K562 (cell line): ENCODE measurements at regions of chr1 and their contacts with region 1.

Region 1: GRCh38 chr1:42924082-42924850 is 34.4 kb downstream of the SLC2A1 start:
- DNase-seq: peak; percentile 97 to 99 (median 98)
- ATAC-seq: peak; percentile 94
- H3K4me3 ChIP-seq: peak overlapping the region; percentile 55
- H3K27ac ChIP-seq: peak overlapping the region; percentile 78
- H3K4me1 ChIP-seq: peaks cover 34 to 43% of the 10 kb centered on the region in 2 experiments
- H3K27me3 ChIP-seq: no peaks in the 10 kb centered on the region
- CTCF ChIP-seq: peak; percentile 33 to 48 (median 45); a peak in 4 of 6 replicates
- EP300 ChIP-seq: no peak
- POLR2A ChIP-seq: peak; percentile 93
- RAD21 ChIP-seq: peak; percentile 24 to 33; a peak in 3 of 4 replicates

Region 2: GRCh38 chr1:42730988-42731387 is 193.3 kb before region 1 on chr1:
- CTCF ChIA-PET with region 1: no interaction called
- POLR2A ChIA-PET with region 1: no interaction called
- in situ Hi-C with region 1: no loop called
- intact Hi-C with region 1: no loop called
- DNase-seq: peak; percentile 47 to 72 (median 52)
- ATAC-seq: peak; percentile 66
- H3K4me3 ChIP-seq: no peak overlapping the region
- H3K27ac ChIP-seq: no peak overlapping the region
- H3K4me1 ChIP-seq: peaks cover 0 to 11% of the 10 kb centered on the region in 2 experiments; a peak in 3 of 5 replicates
- H3K27me3 ChIP-seq: peaks cover 2 to 24% of the 10 kb centered on the region in 2 experiments; a peak in 3 of 5 replicates
- CTCF ChIP-seq: peak; percentile 59 to 69 (median 65); a peak in 5 of 6 replicates
- EP300 ChIP-seq: no peak
- POLR2A ChIP-seq: no peak
- RAD21 ChIP-seq: peak in 1 of 2 experiments; percentile 88; a peak in 2 of 4 replicates

Region 3: DNA sequence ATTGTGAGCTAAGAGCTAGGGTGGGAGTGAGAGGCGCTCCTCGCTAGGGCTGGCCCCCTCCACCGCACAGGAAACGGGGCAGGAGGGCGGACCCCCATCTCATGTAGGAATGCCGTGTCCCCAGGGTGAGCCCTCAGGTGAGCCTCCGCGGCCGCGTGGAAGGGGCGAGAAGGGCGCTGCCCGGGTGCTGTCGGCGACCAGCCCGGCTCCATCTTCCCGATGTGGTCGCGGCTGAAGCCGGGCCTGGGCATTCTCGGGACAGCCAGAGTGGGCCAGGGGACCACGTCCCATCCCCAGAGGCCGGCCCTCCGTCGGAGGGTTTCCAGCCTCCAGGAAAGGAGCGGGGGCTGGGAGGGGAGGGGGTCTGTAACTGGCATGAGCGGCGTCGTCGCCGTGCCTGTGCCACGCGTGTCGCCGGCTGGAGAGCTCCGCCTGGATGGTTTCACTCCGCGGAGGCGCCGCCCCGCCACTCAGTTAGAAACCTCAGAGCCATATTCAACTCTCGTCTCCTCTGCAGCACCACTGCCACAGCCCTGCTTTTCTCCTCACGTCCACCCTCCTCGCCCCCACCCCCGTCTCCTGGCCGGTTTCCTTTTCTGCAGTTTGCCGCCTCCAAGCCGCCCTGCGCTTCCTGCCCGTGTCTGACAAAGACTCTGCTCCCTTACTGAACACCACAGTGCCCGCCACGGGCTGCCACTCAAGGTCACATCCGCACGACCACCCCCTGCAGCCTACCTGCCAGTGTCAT is 139.1 kb before region 1 on chr1 and contains the start of gene TMEM269:
- CTCF ChIA-PET with region 1: no interaction called
- POLR2A ChIA-PET with region 1: no interaction called
- in situ Hi-C with region 1: loop called (anchors 5 kb)
- intact Hi-C with region 1: no loop called
- DNase-seq: no peak
- ATAC-seq: no peak
- H3K4me3 ChIP-seq: no peak within 1 kb of the TSS
- H3K27ac ChIP-seq: no peak within 1 kb of the TSS
- H3K4me1 ChIP-seq: peaks cover 0 to 15% of the 10 kb centered on the region in 2 experiments; a peak in 3 of 5 replicates
- H3K27me3 ChIP-seq: no peaks in the 10 kb centered on the region
- CTCF ChIP-seq: no peak
- EP300 ChIP-seq: no peak
- POLR2A ChIP-seq: no peak
- RAD21 ChIP-seq: no peak
- polyA plus RNA-seq, gene TMEM269: 0.18 to 0.21 TPM

Region 4: GRCh38 chr1:42816585-42817434 is 107.5 kb before region 1 on chr1 and contains the starts of genes ERMAP and SVBP:
- CTCF ChIA-PET with region 1: no interaction called
- POLR2A ChIA-PET with region 1: no interaction called
- in situ Hi-C with region 1: no loop called
- intact Hi-C with region 1: loop called (anchors 1 kb)
- DNase-seq: peak; percentile 93 to 99 (median 99)
- ATAC-seq: peak; percentile 92
- H3K4me3 ChIP-seq: peak within 1 kb of the TSS; percentile 79
- H3K27ac ChIP-seq: peak within 1 kb of the TSS; percentile 99
- H3K4me1 ChIP-seq: peaks cover 16 to 36% of the 10 kb centered on the region in 2 experiments
- H3K27me3 ChIP-seq: no peaks in the 10 kb centered on the region
- CTCF ChIP-seq: peak in 1 of 3 experiments; percentile 27; a peak in 1 of 6 replicates
- EP300 ChIP-seq: peak; percentile 14; the same call in 1 of the 2 replicates
- POLR2A ChIP-seq: peak; percentile 90
- RAD21 ChIP-seq: peak in 1 of 2 experiments; percentile 5; a peak in 1 of 4 replicates
- polyA plus RNA-seq, gene ERMAP: 8.0 to 12.9 TPM
- polyA plus RNA-seq, gene SVBP: 37.9 TPM

Region 5: GRCh38 chr1:42822800-42823392 is 101.4 kb before region 1 on chr1:
- CTCF ChIA-PET with region 1: no interaction called
- POLR2A ChIA-PET with region 1: interaction called, 3 read pairs
- in situ Hi-C with region 1: no loop called
- intact Hi-C with region 1: loop called (anchors 2 kb)
- DNase-seq: peak in 2 of 4 experiments; percentile 44 to 63
- ATAC-seq: no peak
- H3K4me3 ChIP-seq: no peak overlapping the region
- H3K27ac ChIP-seq: peak overlapping the region; percentile 73; the same call in 2 of the 3 replicates
- H3K4me1 ChIP-seq: peaks cover 18 to 58% of the 10 kb centered on the region in 2 experiments
- H3K27me3 ChIP-seq: no peaks in the 10 kb centered on the region
- CTCF ChIP-seq: no peak
- EP300 ChIP-seq: peak; percentile 39; the same call in 1 of the 2 replicates
- POLR2A ChIP-seq: no peak
- RAD21 ChIP-seq: no peak

Region 6: GRCh38 chr1:42936309-42937078 is 12.2 kb after region 1 on chr1:
- CTCF ChIA-PET with region 1: no interaction called
- POLR2A ChIA-PET with region 1: interaction called, 13 read pairs
- in situ Hi-C with region 1: no loop called
- intact Hi-C with region 1: loop called (anchors 1 kb)
- DNase-seq: peak; percentile 93 to 98 (median 95)
- ATAC-seq: peak; percentile 89
- H3K4me3 ChIP-seq: no peak overlapping the region
- H3K27ac ChIP-seq: peak overlapping the region; percentile 74
- H3K4me1 ChIP-seq: peaks cover 96% of the 10 kb centered on the region in 2 experiments
- H3K27me3 ChIP-seq: no peaks in the 10 kb centered on the region
- CTCF ChIP-seq: no peak
- EP300 ChIP-seq: peak; percentile 94
- POLR2A ChIP-seq: 0 out of 2 replicates have a peak, but pooled peaks have one; percentile 5
- RAD21 ChIP-seq: peak in 1 of 2 experiments; percentile 33; a peak in 1 of 4 replicates

Region 7: GRCh38 chr1:42958488-42959319 is 34.4 kb after region 1 on chr1 and contains the start of gene SLC2A1:
- CTCF ChIA-PET with region 1: no interaction called
- POLR2A ChIA-PET with region 1: interaction called, 3 read pairs
- in situ Hi-C with region 1: no loop called
- intact Hi-C with region 1: loop called (anchors 1 kb)
- DNase-seq: peak; percentile 98 to 99 (median 98)
- ATAC-seq: peak; percentile 84
- H3K4me3 ChIP-seq: peak within 1 kb of the TSS; percentile 91
- H3K27ac ChIP-seq: peak within 1 kb of the TSS; percentile 92
- H3K4me1 ChIP-seq: peaks cover 69 to 71% of the 10 kb centered on the region in 2 experiments
- H3K27me3 ChIP-seq: no peaks in the 10 kb centered on the region
- CTCF ChIP-seq: 0 out of 6 replicates have a peak, but pooled peaks of 1 of the 3 experiments have one; percentile 10
- EP300 ChIP-seq: no peak
- POLR2A ChIP-seq: peak; percentile 98
- RAD21 ChIP-seq: no peak; a peak in 1 of 4 replicates
- polyA plus RNA-seq, gene SLC2A1: 12.6 to 22.9 TPM

Region 8: DNA sequence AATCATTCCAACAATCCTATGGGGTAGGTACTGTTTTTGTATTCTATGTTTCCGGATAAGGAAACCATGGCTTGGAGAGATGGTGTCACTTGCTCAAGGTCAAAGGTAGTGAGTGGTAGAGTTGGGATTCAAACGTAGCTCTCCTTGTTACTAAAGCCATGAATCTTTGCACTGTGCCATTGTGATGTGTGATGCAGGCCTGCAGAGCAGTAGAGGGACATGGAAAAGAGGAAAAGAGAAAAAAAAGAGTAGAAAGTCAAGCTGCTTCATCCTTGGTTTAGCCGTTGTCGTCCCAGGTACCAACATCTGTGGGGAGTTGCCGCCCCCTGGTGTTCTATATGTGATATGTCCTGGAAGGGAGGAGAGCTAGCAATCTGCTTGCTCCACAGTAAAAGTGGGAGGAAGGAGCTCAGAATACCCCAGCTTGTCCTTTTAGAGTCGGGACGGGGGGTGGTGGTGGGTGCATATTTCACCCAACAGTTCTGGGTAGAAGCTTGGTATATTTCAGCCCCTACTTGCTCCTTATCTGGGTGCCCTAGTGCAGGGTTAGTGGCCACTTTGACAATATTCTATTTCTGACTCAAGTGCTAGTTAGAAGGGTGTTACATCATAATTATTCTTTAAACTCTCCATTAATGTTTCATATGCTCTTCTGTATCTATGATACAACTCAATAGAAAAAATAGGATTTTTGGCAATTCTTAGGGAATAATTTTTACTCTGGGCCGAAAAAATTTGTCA is 149.4 kb after region 1 on chr1:
- CTCF ChIA-PET with region 1: interaction called, 5 read pairs
- POLR2A ChIA-PET with region 1: interaction called, 7 read pairs
- in situ Hi-C with region 1: loop called (anchors 5 kb)
- intact Hi-C with region 1: loop called (anchors 2 kb)
- DNase-seq: peak; percentile 84 to 90 (median 85)
- ATAC-seq: peak; percentile 94
- H3K4me3 ChIP-seq: no peak overlapping the region
- H3K27ac ChIP-seq: no peak overlapping the region; the same call in 2 of the 3 replicates
- H3K4me1 ChIP-seq: peaks cover 15 to 23% of the 10 kb centered on the region in 2 experiments; a peak in 4 of 5 replicates
- H3K27me3 ChIP-seq: no peaks in the 10 kb centered on the region
- CTCF ChIP-seq: peak; percentile 90 to 96 (median 94)
- EP300 ChIP-seq: no peak
- POLR2A ChIP-seq: no peak
- RAD21 ChIP-seq: peak; percentile 99 to 100

Region 9: DNA sequence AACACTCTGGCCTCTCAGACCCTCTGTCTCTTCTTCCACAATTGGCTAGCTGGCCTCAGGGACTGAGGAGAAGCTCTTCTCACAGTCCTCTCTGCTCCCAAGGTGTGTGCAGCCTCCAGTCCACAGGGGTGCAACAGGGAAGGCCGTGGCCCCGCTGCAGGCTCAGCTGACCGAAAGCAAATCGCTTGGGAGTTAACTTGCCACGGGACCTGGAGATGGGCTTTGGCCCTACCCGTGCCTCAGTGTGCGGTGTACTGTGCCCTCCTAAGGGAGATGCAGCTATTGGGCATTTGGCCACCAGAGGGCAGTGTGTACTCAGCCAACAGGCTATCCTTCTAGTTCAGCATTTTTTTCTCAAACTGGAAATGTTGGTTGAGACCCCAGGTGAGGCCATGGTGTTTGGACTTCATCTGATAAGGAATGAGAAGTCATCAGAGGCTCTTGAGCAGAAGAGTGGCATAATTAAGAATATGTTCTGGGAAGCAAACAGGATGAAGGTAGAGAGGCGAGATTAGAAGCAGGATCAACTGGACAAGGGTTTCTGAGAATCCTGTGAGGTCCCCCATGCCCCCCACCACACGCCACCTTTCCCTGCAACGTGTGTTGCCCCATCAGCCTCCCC is 303.0 kb after region 1 on chr1:
- CTCF ChIA-PET with region 1: no interaction called
- POLR2A ChIA-PET with region 1: no interaction called
- in situ Hi-C with region 1: no loop called
- intact Hi-C with region 1: no loop called
- DNase-seq: peak; percentile 82 to 88 (median 87)
- ATAC-seq: peak; percentile 97
- H3K4me3 ChIP-seq: no peak overlapping the region
- H3K27ac ChIP-seq: no peak overlapping the region
- H3K4me1 ChIP-seq: 0 out of 5 replicates have a peak, but pooled peaks cover 0 to 3% of the 10 kb centered on the region in 2 experiments
- H3K27me3 ChIP-seq: peaks cover 12 to 55% of the 10 kb centered on the region in 2 experiments
- CTCF ChIP-seq: peak; percentile 90 to 98 (median 96)
- EP300 ChIP-seq: no peak
- POLR2A ChIP-seq: no peak
- RAD21 ChIP-seq: peak; percentile 95 to 98